Activated T-helper 1 cell treated with anti-CD3 and anti-CD28 coated beads, Interleukin-12 subunit alpha, Interleukin-12 subunit beta, Interleukin-2, Interleukin-4 antibody, amounts not matched to agents 30 ng/mL and 10 ng/mL and 1 ng/mL, durations not matched to agents 14 hours and 24 hours and 36 hours (primary cell): ENCODE measurements at regions of chr13 and their contacts with region 1.

Region 1: DNA sequence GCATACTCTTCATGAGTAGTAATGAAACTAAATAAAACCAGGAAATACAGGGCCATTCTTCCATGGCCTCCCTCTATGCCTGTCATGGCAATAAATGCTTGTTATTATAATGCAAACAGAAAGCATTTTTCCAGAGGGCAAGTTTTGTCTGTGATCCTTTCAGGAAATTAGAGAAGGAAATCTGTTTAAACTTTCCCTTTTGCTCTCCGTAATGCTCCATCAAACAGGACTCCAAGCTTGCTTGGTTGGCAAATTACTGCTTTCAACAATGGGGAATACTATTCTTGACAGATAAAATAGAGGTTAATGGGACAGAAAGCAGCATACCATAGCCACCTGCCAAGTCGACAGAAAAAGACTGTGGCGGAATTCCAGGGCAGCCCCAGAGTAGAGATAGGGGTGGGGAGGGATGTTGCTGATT is 252.5 kb downstream of the LHFPL6 start:
- DNase-seq: no peak
- H3K4me3 Mint-ChIP-seq: no peak overlapping the region
- H3K27ac Mint-ChIP-seq: no peak overlapping the region
- H3K4me1 Mint-ChIP-seq: no peaks in the 10 kb centered on the region
- H3K27me3 Mint-ChIP-seq: peaks cover 4% of the 10 kb centered on the region

Region 2: DNA sequence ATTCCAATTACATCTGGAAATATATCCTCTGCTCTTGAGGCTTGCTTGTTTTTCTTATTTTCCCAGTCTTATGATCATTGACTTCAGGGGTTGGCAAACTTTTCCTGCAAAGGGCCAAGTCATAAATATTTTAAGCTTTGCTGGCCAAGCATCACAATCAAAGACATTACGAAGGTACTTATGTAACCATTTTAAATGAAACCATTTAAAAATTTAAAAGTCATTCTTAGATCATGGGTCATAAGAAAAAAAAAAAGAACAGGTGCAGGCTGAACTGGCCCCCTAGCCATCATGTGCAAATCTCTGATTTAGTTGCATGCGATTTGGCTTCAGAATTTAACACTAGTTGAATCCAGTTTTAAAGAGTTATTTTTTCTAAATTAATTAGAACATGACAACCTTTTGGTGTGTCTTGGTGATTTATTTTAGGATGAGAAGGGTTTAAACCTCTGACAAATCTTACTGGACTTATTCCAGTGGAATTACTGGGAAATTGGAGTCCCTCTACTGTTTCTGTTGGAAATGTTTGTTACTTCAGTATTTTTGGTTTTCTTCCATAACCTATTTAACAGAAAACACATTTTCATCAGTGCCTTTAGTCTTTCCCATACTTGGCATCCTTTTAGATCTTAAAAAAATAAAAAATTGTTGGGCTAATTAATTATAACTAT is 164.1 kb before region 1 on chr13:
- intact Hi-C with region 1: no loop called
- DNase-seq: no peak
- H3K4me3 Mint-ChIP-seq: no peak overlapping the region
- H3K27ac Mint-ChIP-seq: no peak overlapping the region
- H3K4me1 Mint-ChIP-seq: no peaks in the 10 kb centered on the region
- H3K27me3 Mint-ChIP-seq: peaks cover 11% of the 10 kb centered on the region

Region 3: DNA sequence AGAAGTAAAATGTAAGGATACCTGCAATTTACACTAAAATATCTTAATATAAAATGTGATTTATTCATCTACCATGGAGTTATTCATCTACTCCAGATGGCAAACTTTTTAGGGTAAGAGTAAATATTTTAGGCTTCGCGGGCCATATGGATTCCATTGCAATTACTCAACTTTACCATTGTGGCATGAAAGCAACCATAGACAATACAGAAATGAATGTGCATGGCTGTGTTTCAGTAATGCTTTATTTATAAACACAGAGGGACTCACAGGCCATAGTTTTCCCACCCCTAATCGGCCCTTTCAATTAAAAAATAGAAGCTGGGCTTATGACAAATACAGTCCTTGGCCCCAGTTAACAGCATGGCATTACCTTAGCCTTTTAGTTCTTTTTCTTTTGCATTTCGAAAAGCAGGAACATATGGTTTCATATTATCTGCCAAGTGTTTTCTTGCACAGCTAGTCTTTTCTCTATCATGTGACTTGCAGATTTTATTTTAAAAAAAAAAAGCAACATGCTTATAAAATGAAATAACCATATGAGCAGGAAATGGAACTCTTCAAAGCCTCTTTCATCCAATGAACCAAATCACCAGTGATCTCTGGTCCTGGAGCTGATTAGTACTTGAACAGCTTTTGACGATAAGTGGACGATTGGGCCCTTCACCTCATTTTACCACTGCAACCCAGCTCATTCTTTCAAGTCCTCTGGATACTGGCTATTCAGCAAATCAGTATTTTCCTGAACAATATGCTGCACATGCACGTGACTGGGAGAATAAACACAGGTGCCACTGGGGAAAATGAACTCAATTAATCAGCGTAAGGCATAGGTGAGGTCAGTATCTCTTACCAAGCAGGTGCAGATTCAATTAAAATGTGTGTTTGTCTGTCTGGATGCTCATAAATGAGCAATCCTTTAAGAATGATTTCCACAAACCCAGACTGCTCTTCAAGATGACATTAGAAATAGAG is 188.6 kb after region 1 on chr13:
- intact Hi-C with region 1: loop called (anchors 10 kb)
- DNase-seq: no peak
- H3K4me3 Mint-ChIP-seq: no peak overlapping the region
- H3K27ac Mint-ChIP-seq: no peak overlapping the region
- H3K4me1 Mint-ChIP-seq: no peaks in the 10 kb centered on the region
- H3K27me3 Mint-ChIP-seq: no peaks in the 10 kb centered on the region

Region 4: DNA sequence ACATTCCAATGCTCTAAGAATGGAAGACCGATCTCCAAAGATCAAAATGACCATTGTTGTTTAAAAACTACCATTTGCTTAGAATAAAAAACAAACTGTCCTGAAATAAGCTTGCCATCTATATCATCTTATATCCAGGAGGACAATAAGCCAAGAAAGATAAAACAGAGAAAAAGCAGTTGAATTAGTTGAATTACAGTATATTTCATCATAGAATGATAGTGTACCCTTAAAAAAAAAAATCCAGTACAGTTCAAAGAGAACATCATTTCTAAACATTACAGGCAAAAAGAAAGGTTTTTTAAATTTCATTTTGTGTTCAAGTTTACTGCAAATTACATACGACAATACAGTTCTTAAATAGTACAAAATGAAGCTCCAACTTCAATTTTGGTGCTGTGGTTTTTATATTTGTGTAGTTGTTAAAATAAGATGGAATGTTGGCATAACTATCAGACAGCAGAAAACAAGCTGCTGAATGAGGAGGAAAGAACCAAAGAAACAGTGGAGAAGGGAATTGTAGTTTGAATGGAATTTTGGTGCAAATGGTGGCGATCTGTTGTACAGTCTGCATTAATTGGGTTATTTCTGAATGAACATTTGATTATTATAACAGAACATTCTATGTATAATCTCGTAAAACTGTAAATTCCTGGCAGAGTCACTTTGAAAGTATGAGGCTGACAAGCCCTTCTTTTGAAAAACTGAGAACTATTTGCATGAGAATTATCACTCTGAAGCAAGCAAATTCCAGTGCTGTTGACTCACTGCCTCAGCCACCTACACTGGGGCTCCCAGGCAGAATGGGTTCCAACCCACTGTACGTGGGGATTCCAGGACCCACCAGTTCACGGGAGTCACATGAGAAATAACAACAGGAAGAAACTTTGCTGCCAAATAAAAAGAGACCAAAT is 214.8 kb after region 1 on chr13:
- intact Hi-C with region 1: no loop called
- DNase-seq: no peak
- H3K4me3 Mint-ChIP-seq: no peak overlapping the region
- H3K27ac Mint-ChIP-seq: no peak overlapping the region
- H3K4me1 Mint-ChIP-seq: no peaks in the 10 kb centered on the region
- H3K27me3 Mint-ChIP-seq: peaks cover 4% of the 10 kb centered on the region